ENCODE measurements at regions of chrX and their contacts with region 1.

Region 1: DNA sequence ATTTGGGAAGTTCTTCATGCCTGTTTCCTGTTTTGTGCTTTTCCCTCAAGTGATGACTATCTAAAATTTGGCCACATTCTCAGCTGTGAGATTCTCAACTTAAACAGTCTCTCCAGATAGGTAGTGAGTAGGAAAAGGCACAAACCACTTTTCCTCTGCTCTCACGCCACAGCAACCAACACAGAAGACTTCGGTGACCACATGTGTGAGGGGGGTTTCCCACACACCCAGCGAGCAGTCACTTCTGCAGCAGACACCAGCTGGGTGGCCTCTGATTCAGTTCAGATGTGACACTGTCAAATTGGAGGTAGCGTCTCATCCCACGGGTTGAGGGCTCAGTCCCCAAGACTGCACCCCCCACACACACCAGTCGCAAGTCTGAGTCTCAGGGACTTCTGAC is 25.1 kb upstream of the CLDN34 start:
- DNase-seq: no peak
- H3K4me3 ChIP-seq: no peak overlapping the region
- H3K27ac ChIP-seq: no peak overlapping the region
- H3K4me1 ChIP-seq: no peaks in the 10 kb centered on the region
- H3K27me3 ChIP-seq: no peaks in the 10 kb centered on the region
- CTCF ChIP-seq: no peak

Region 2: GRCh38 chrX:9873952-9874351 is 68.1 kb before region 1 on chrX:
- CTCF ChIA-PET with region 1: no interaction called
- dilution Hi-C with region 1: loop called (anchors 5 kb)
- in situ Hi-C with region 1: no loop called
- intact Hi-C with region 1: no loop called
- DNase-seq: no peak
- H3K4me3 ChIP-seq: no peak overlapping the region
- H3K27ac ChIP-seq: no peak overlapping the region
- H3K4me1 ChIP-seq: peaks cover 3% of the 10 kb centered on the region
- H3K27me3 ChIP-seq: no peaks in the 10 kb centered on the region
- CTCF ChIP-seq: peak; percentile 45 to 63